T-cell (primary cell): ENCODE measurements at regions of chr11 and their contacts with region 1.

Region 1: DNA sequence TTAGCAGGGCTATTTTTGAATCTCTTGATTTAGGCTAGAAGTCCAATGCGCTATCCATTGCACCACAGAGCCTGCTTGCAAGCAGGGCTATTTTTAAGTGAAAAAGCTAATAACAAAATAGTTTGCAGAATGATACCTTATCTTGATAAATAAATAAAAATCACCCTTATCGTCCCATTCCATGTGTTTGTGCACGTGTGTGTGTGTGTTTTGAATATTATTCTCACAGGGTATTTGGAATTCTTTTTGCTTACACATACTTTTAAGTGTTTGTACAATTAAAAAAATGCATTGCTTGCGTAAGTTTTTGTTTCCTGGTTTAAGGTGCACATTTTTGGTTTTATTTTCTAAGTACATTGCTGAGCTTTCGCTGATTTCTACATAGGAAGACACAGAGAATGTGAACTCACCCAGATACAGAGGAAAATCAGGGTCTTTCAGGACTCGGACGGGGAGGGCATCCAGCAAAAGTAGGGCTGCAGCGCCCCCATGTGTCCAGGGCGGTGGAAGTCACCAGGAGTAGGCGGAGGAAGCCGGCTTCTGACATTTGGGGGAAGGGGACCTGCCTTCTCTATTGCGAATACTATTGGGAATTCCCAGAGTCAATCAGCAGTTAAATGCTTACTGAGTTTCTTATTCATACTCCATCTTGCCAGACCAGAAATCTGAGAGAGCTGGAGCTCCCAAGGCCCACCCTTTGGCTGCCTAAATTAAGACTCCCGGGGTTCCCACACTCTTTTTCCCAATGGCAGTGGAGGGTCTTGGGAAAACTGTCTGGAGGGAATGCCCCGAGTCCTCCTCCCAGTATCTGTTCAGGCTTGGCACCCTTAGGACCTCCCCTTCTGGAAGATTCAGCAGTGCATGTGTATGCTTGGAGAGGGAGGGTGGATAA is 27.2 kb downstream of the SLC1A2 start:
- DNase-seq: peak; percentile 53 to 92 (median 82)
- ATAC-seq: peak; percentile 75 to 96 (median 86)
- H3K4me3 ChIP-seq: no peak overlapping the region
- H3K4me3 Mint-ChIP-seq: peak overlapping the region; percentile 48 to 60 (median 57)
- H3K27ac ChIP-seq: no peak overlapping the region
- H3K27ac Mint-ChIP-seq: peak overlapping the region in 1 of 2 donors; percentile 28
- H3K4me1 ChIP-seq: peaks cover 0 to 5% of the 10 kb centered on the region in 2 experiments
- H3K4me1 Mint-ChIP-seq: peaks cover 24 to 27% (median 25%) of the 10 kb centered on the region in 3 donors
- H3K27me3 ChIP-seq: peaks cover 0 to 4% of the 10 kb centered on the region in 2 experiments
- H3K27me3 Mint-ChIP-seq: peaks cover 0 to 2% of the 10 kb centered on the region in 2 donors

Region 2: GRCh38 chr11:34585735-34586487 is 806.3 kb before region 1 on chr11:
- CTCF ChIA-PET with region 1: interaction called, 4 to 15 read pairs
- POLR2A ChIA-PET with region 1: no interaction called
- DNase-seq: peak in 1 of 35 experiments; percentile 59
- ATAC-seq: peak in 1 of 4 experiments; percentile 12
- H3K4me3 ChIP-seq: no peak overlapping the region
- H3K4me3 Mint-ChIP-seq: no peak overlapping the region
- H3K27ac ChIP-seq: no peak overlapping the region
- H3K27ac Mint-ChIP-seq: no peak overlapping the region
- H3K4me1 ChIP-seq: no peaks in the 10 kb centered on the region
- H3K4me1 Mint-ChIP-seq: peaks cover 0 to 8% (median 4%) of the 10 kb centered on the region in 3 donors
- H3K27me3 ChIP-seq: peaks cover 3 to 7% of the 10 kb centered on the region in 2 experiments
- H3K27me3 Mint-ChIP-seq: peaks cover 21 to 27% of the 10 kb centered on the region in 2 donors

Region 3: GRCh38 chr11:34997952-34998528 is 394.1 kb before region 1 on chr11:
- CTCF ChIA-PET with region 1: interaction called, 4 to 10 read pairs
- POLR2A ChIA-PET with region 1: no interaction called
- DNase-seq: peak in 2 of 35 experiments; percentile 14 to 52
- ATAC-seq: peak in 3 of 4 experiments; percentile 45 to 56 (median 56)
- H3K4me3 ChIP-seq: no peak overlapping the region
- H3K4me3 Mint-ChIP-seq: peak overlapping the region; percentile 7 to 52 (median 26)
- H3K27ac ChIP-seq: peak overlapping the region; percentile 13
- H3K27ac Mint-ChIP-seq: peak overlapping the region; percentile 44 to 76
- H3K4me1 ChIP-seq: peaks cover 0 to 18% of the 10 kb centered on the region in 2 experiments
- H3K4me1 Mint-ChIP-seq: peaks cover 24 to 35% (median 32%) of the 10 kb centered on the region in 3 donors
- H3K27me3 ChIP-seq: no peaks in the 10 kb centered on the region
- H3K27me3 Mint-ChIP-seq: no peaks in the 10 kb centered on the region